ENCODE measurements at regions of chr5 and their contacts with region 1.

Region 1: DNA sequence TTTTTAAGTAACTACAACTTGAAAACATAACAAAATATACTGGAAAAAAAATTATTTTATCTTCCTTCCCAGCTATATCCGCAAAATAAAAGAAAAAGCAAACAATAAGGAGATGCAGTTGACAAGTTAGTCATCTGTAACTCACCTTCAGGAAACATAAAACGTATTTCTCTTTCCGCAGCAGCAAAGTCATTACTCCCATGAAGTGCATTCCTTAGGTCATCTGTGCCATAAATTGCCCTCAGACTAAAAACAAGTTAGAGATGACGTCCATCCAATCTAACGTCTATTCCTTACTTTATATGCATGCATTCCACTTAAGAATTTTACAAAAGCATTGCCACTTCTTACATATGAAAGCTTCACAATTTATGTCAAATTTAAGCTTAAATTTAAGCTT is 10.9 kb downstream of the NME5 start:
- DNase-seq: no peak
- H3K4me3 ChIP-seq: no peak overlapping the region
- H3K27ac ChIP-seq: no peak overlapping the region
- H3K4me1 ChIP-seq: no peaks in the 10 kb centered on the region
- H3K27me3 ChIP-seq: no peaks in the 10 kb centered on the region
- CTCF ChIP-seq: no peak
- EP300 ChIP-seq: no peak
- POLR2A ChIP-seq: no peak

Region 2: GRCh38 chr5:137778772-137779564 is 349.4 kb before region 1 on chr5:
- intact Hi-C with region 1: loop called in 2 of 4 experiments (anchors 5 to 10 kb)
- DNase-seq: no peak
- H3K4me3 ChIP-seq: no peak overlapping the region
- H3K27ac ChIP-seq: no peak overlapping the region
- H3K4me1 ChIP-seq: no peaks in the 10 kb centered on the region
- H3K27me3 ChIP-seq: no peaks in the 10 kb centered on the region
- CTCF ChIP-seq: peak; percentile 51 to 62 (median 57)
- EP300 ChIP-seq: no peak
- POLR2A ChIP-seq: no peak

Region 3: GRCh38 chr5:138035605-138036537 is 92.5 kb before region 1 on chr5:
- intact Hi-C with region 1: loop called in 1 of 4 experiments (anchors 2 kb)
- DNase-seq: peak; percentile 32 to 62 (median 48)
- H3K4me3 ChIP-seq: no peak overlapping the region
- H3K27ac ChIP-seq: peak overlapping the region in 1 of 2 donors; percentile 50
- H3K4me1 ChIP-seq: peaks cover 11% of the 10 kb centered on the region
- H3K27me3 ChIP-seq: no peaks in the 10 kb centered on the region
- CTCF ChIP-seq: peak; percentile 35 to 92 (median 89)
- EP300 ChIP-seq: no peak
- POLR2A ChIP-seq: no peak

Region 4: GRCh38 chr5:138077065-138077696 is 51.2 kb before region 1 on chr5:
- intact Hi-C with region 1: loop called in 3 of 4 experiments (anchors 2 to 10 kb)
- DNase-seq: peak; percentile 43 to 77 (median 56)
- H3K4me3 ChIP-seq: no peak overlapping the region
- H3K27ac ChIP-seq: no peak overlapping the region
- H3K4me1 ChIP-seq: no peaks in the 10 kb centered on the region
- H3K27me3 ChIP-seq: no peaks in the 10 kb centered on the region
- CTCF ChIP-seq: peak; percentile 53 to 73 (median 59)
- EP300 ChIP-seq: no peak
- POLR2A ChIP-seq: no peak

Region 5: GRCh38 chr5:138083702-138084101 is 44.6 kb before region 1 on chr5 and contains the start of gene WNT8A:
- intact Hi-C with region 1: loop called in 3 of 4 experiments (anchors 5 to 10 kb)
- DNase-seq: no peak
- H3K4me3 ChIP-seq: no peak within 1 kb of the TSS
- H3K27ac ChIP-seq: no peak within 1 kb of the TSS
- H3K4me1 ChIP-seq: no peaks in the 10 kb centered on the region
- H3K27me3 ChIP-seq: no peaks in the 10 kb centered on the region
- CTCF ChIP-seq: no peak
- EP300 ChIP-seq: no peak
- POLR2A ChIP-seq: no peak
- total RNA-seq, gene WNT8A: not detected

Region 6: DNA sequence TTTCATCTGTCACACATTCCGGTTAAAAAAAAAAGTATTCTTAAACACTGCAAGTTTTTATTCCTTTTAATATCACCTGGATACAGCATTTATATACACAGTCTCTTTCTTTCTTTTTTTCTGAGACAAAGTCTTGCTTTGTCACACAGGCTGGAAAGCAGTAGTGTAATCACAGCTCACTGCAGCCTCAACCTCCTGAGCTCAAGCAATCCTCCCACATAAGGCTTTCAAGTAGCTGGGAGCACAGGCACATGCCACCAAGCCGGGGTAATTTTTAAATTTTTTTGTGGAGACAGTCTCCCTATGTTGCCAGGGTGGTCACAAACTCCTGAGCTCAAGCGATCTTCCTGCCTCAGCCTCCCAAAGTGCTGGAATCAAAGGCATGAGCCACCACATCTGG is 64.5 kb after region 1 on chr5:
- intact Hi-C with region 1: no loop called
- DNase-seq: no peak
- H3K4me3 ChIP-seq: no peak overlapping the region
- H3K27ac ChIP-seq: no peak overlapping the region
- H3K4me1 ChIP-seq: no peaks in the 10 kb centered on the region
- H3K27me3 ChIP-seq: no peaks in the 10 kb centered on the region
- CTCF ChIP-seq: no peak
- EP300 ChIP-seq: no peak
- POLR2A ChIP-seq: no peak